ENCODE measurements at regions of chr14 and their contacts with region 1.

Region 1: DNA sequence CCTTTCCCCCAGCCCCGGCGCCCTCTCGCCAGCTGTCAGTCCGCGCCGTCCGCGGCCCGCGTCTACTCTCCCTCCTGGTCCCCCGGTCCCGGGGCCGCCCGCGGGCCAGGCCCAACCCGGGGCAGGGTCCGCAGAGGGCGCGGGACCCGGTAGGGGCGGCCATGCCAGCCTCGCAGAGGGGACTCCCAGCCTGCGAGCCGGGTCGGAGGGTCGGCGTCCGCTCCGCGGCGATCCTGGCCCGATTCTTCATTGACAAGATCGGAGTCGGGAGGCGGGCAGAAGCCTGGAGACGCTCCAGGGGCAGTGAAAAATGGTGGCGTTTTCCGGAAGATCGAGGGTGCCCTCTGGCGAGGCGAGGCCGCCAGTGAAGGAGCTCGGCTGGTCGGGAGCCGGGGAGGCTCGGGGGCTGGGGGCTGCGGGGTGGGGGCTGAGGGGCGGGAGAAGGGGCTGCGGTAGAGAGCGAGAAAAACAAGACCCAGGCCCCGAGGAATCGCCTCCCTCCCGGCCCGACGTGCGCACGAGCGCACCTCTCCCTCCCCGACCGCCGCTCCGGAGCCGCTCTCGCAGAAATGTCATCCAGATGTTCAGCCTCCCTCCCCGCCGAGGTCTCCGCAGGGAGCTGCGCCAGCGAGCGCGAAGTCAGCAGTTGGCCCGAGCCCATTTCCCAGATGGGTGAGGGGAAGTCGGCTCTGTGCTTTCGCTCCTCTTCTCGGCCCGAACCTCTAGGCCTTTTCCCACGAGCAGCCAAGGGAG is 647 bp upstream of the TGFB3 start:
- DNase-seq: peak; percentile 81
- H3K4me3 Mint-ChIP-seq: peak overlapping the region; percentile 73
- H3K27ac Mint-ChIP-seq: peak overlapping the region; percentile 78
- H3K4me1 Mint-ChIP-seq: peaks cover 34% of the 10 kb centered on the region
- H3K27me3 Mint-ChIP-seq: no peaks in the 10 kb centered on the region
- CTCF ChIP-seq: peak; percentile 72

Region 2: GRCh38 chr14:75597149-75597548 is 385.3 kb before region 1 on chr14:
- CTCF ChIA-PET with region 1: no interaction called
- POLR2A ChIA-PET with region 1: no interaction called
- intact Hi-C with region 1: no loop called
- DNase-seq: no peak
- H3K4me3 Mint-ChIP-seq: no peak overlapping the region
- H3K27ac Mint-ChIP-seq: no peak overlapping the region
- H3K4me1 Mint-ChIP-seq: peaks cover 14% of the 10 kb centered on the region
- H3K27me3 Mint-ChIP-seq: no peaks in the 10 kb centered on the region
- CTCF ChIP-seq: no peak

Region 3: DNA sequence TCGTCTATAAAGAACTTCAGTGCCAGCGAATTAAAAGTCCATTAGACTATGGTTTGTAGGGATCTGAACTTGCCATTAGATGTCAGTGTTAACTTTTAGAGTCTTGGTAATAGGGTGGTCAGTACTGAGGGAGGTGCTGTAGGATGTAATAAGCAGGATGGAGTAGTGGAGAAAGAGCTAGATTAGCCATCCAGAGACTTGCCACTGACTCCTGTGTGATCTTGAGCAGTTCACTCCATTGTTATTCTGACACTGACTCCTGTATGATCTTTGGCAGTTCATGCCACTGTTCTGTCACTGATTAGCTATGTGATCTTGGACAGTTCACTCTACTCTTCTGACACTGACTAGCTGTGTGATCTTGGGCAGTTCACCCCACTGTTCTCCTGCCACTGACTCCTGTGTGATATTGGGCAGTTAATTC is 187.8 kb before region 1 on chr14:
- CTCF ChIA-PET with region 1: interaction called, 13 read pairs
- POLR2A ChIA-PET with region 1: interaction called, 4 read pairs
- intact Hi-C with region 1: loop called (anchors 1 kb)
- DNase-seq: peak; percentile 26
- H3K4me3 Mint-ChIP-seq: no peak overlapping the region
- H3K27ac Mint-ChIP-seq: no peak overlapping the region
- H3K4me1 Mint-ChIP-seq: no peaks in the 10 kb centered on the region
- H3K27me3 Mint-ChIP-seq: no peaks in the 10 kb centered on the region
- CTCF ChIP-seq: peak; percentile 24

Measured in MCF 10A (cell line).